ENCODE measurements at regions of chr14 and their contacts with region 1.

Region 1: GRCh38 chr14:66395300-66395699 is 90.9 kb upstream of the CCDC196 start:
- DNase-seq: peak; percentile 84
- H3K4me3 Mint-ChIP-seq: no peak overlapping the region
- H3K27ac Mint-ChIP-seq: no peak overlapping the region
- H3K4me1 Mint-ChIP-seq: peaks cover 6% of the 10 kb centered on the region
- H3K27me3 Mint-ChIP-seq: peaks cover 17% of the 10 kb centered on the region

Region 2: GRCh38 chr14:66359500-66359899 is 35.8 kb before region 1 on chr14:
- intact Hi-C with region 1: loop called (anchors 2 kb)
- DNase-seq: peak; percentile 70
- H3K4me3 Mint-ChIP-seq: no peak overlapping the region
- H3K27ac Mint-ChIP-seq: no peak overlapping the region
- H3K4me1 Mint-ChIP-seq: peaks cover 1% of the 10 kb centered on the region
- H3K27me3 Mint-ChIP-seq: peaks cover 9% of the 10 kb centered on the region